T-cell (primary cell): ENCODE measurements at regions of chr9 and their contacts with region 1.

Region 1: DNA sequence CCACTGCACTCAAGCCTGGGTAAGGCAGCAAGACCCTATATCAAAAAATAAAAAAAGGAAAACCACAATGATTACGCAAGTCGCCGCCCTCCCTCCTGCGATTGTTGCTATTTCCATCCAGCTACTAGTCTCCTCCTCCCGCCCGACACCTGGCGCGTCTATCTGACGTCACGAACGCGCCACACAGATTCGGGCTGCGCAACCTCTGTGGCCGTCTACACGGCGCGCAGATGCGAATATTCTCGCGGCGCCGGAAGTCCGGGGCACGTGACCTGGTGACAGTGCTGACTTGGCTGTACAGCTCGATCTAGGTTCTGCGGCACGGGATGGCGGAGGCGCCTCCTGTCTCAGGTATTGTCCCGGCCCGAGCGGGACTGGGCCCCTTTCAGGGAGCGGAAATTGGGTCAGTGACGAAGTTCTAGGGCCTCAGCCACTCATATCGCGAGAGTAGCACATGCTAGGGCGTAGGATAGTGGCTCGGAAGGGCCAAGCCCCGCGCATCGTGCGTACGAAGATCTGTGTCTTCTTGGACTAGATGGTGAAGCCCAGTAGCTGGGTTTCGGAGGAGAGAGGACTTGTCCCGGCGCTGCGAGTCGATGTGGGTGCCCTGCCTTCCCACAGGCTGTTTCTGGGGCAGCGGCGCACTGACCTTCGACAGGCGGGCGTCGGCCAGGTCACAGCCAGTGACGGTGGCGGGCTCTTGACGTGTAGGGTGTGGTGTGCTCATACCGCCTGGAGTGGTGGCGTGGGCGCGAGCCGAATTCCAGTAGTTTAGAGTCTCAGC is at the start of gene NFX1:
- DNase-seq: peak; percentile 96 to 100 (median 99)
- ATAC-seq: peak; percentile 86 to 90 (median 88)
- H3K4me3 ChIP-seq: peak within 1 kb of the TSS; percentile 85 to 88
- H3K4me3 Mint-ChIP-seq: peak within 1 kb of the TSS; percentile 84 to 99 (median 98)
- H3K27ac ChIP-seq: peak within 1 kb of the TSS; percentile 100
- H3K27ac Mint-ChIP-seq: peak within 1 kb of the TSS; percentile 100
- H3K4me1 ChIP-seq: peaks cover 19 to 53% of the 10 kb centered on the region in 2 experiments
- H3K4me1 Mint-ChIP-seq: peaks cover 37 to 65% (median 61%) of the 10 kb centered on the region in 3 donors
- H3K27me3 ChIP-seq: no peaks in the 10 kb centered on the region
- H3K27me3 Mint-ChIP-seq: no peaks in the 10 kb centered on the region
- total RNA-seq, gene NFX1: 41.5 to 55.8 (median 48.5) TPM

Region 2: GRCh38 chr9:33306037-33306436 is 15.6 kb after region 1 on chr9:
- CTCF ChIA-PET with region 1: interaction called, 4 to 10 read pairs
- POLR2A ChIA-PET with region 1: interaction called in 1 of 2 experiments, 3 read pairs
- DNase-seq: no peak
- ATAC-seq: no peak
- H3K4me3 ChIP-seq: no peak overlapping the region
- H3K4me3 Mint-ChIP-seq: no peak overlapping the region
- H3K27ac ChIP-seq: no peak overlapping the region
- H3K27ac Mint-ChIP-seq: no peak overlapping the region
- H3K4me1 ChIP-seq: no peaks in the 10 kb centered on the region
- H3K4me1 Mint-ChIP-seq: peaks cover under 1 to 7% (median 3%) of the 10 kb centered on the region in 3 donors
- H3K27me3 ChIP-seq: no peaks in the 10 kb centered on the region
- H3K27me3 Mint-ChIP-seq: no peaks in the 10 kb centered on the region